ENCODE measurements at regions of chr11 and their contacts with region 1.

Region 1: GRCh38 chr11:47980245-47981049 is at the start of gene PTPRJ:
- DNase-seq: peak; percentile 65 to 73
- ATAC-seq: peak; percentile 61 to 70
- H3K4me3 ChIP-seq: peak within 1 kb of the TSS; percentile 91
- H3K27ac ChIP-seq: peak within 1 kb of the TSS; percentile 94 to 100
- H3K4me1 ChIP-seq: peaks cover 55% of the 10 kb centered on the region
- CTCF ChIP-seq: no peak
- EP300 ChIP-seq: no peak
- POLR2A ChIP-seq: peak; percentile 40
- RAD21 ChIP-seq: peak in 1 of 2 experiments; percentile 24; a peak in 3 of 5 replicates
- polyA plus RNA-seq, gene PTPRJ: 30.3 and 46.2 TPM in 2 replicates

Region 2: DNA sequence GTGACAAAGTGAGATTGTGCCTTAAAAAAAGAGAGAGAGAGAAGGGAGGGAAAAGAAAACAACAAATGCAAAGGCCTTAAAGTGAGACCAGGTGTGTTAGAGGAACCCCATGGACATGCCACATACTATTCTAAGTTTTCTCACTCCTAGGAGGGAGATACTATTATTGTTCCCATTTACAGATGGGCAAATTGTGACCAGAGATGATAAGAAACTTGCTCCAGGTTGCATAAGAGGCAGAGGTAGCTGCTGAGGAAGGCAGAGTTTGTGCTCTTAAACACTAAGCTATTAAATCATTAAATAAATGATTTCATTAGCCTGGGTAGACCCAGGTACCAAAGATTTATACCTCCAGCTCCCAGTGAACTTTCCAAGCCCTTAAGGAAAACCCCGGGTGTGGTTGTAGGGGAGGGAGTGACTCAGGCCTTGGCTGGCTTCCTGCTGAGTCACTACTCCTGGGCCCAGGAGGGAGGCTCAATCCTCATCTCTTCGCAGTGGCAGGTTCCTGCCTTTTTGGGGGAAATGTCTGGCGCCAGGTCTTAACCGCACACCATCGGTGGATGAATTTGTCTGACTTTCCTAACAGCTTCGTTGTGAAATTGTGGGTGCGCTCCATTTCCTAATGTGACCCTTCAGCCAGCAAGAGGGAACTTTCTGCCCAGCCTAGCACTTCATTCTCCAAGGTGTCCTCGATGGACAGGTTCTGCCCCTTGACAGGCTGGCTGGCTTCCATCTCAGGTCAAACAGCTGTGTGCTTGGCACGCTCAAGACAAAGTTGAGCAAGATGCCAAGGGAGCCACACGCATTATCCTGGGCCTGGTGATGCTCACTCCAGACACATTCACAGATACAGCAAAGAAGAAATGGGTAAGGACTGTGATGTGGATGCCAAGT is 33.5 kb before region 1 on chr11:
- CTCF ChIA-PET with region 1: interaction called, 6 read pairs
- POLR2A ChIA-PET with region 1: interaction called, 15 read pairs
- DNase-seq: peak; percentile 95 to 98
- ATAC-seq: peak; percentile 88 to 94
- H3K4me3 ChIP-seq: no peak overlapping the region
- H3K27ac ChIP-seq: peak overlapping the region; percentile 87
- H3K4me1 ChIP-seq: peaks cover 66% of the 10 kb centered on the region
- CTCF ChIP-seq: no peak
- EP300 ChIP-seq: peak; percentile 76 to 92; a peak in 3 of 5 replicates
- POLR2A ChIP-seq: no peak
- RAD21 ChIP-seq: peak; percentile 15 to 37; a peak in 4 of 5 replicates

Region 3: GRCh38 chr11:47992959-47993820 is 12.7 kb after region 1 on chr11:
- CTCF ChIA-PET with region 1: interaction called, 6 read pairs
- POLR2A ChIA-PET with region 1: interaction called, 10 read pairs
- DNase-seq: peak; percentile 72 to 95
- ATAC-seq: peak; percentile 90 to 92
- H3K4me3 ChIP-seq: no peak overlapping the region
- H3K27ac ChIP-seq: peak overlapping the region; percentile 97 to 100
- H3K4me1 ChIP-seq: peaks cover 92% of the 10 kb centered on the region
- CTCF ChIP-seq: no peak
- EP300 ChIP-seq: peak; percentile 80 to 82; a peak in 3 of 5 replicates
- POLR2A ChIP-seq: no peak
- RAD21 ChIP-seq: peak; percentile 28 to 42; a peak in 4 of 5 replicates

Region 4: GRCh38 chr11:48063424-48063978 is 83.1 kb after region 1 on chr11:
- CTCF ChIA-PET with region 1: no interaction called
- POLR2A ChIA-PET with region 1: interaction called, 11 read pairs
- DNase-seq: peak; percentile 57 to 78
- ATAC-seq: peak; percentile 61 to 72
- H3K4me3 ChIP-seq: no peak overlapping the region
- H3K27ac ChIP-seq: peak overlapping the region; percentile 74 to 90
- H3K4me1 ChIP-seq: peaks cover 84% of the 10 kb centered on the region
- CTCF ChIP-seq: no peak
- EP300 ChIP-seq: peak in 1 of 2 experiments; percentile 57; a peak in 2 of 5 replicates
- POLR2A ChIP-seq: no peak
- RAD21 ChIP-seq: peak in 1 of 2 experiments; percentile 15; a peak in 1 of 5 replicates

Region 5: DNA sequence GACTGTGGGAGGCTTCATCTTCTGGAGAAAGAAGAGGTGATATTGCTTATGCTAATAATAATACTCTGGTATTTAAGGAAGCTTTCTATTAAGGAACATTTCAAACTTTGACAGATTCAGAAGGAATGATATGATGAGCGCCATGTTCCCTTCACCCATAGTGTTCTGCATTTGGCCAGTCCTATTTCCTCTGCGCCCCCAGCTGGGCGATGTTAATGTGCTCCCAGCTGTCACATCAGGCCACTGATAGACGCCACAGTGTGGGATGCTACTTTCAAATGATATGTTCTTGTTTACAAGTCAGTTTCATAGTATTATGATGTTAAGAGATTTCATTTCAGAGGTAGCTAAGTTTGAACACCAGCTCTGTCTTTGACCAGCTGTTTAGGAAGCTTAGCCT is 166.5 kb after region 1 on chr11:
- CTCF ChIA-PET with region 1: no interaction called
- POLR2A ChIA-PET with region 1: no interaction called
- DNase-seq: no peak
- ATAC-seq: no peak
- H3K4me3 ChIP-seq: no peak overlapping the region
- H3K27ac ChIP-seq: no peak overlapping the region
- H3K4me1 ChIP-seq: 0 out of 3 replicates have a peak, but pooled peaks cover 3% of the 10 kb centered on the region
- CTCF ChIP-seq: no peak
- EP300 ChIP-seq: no peak
- POLR2A ChIP-seq: no peak
- RAD21 ChIP-seq: no peak

Measured in A549 (cell line).